A673 (cell line): ENCODE measurements at regions of chr10 and their contacts with region 1.

Region 1: DNA sequence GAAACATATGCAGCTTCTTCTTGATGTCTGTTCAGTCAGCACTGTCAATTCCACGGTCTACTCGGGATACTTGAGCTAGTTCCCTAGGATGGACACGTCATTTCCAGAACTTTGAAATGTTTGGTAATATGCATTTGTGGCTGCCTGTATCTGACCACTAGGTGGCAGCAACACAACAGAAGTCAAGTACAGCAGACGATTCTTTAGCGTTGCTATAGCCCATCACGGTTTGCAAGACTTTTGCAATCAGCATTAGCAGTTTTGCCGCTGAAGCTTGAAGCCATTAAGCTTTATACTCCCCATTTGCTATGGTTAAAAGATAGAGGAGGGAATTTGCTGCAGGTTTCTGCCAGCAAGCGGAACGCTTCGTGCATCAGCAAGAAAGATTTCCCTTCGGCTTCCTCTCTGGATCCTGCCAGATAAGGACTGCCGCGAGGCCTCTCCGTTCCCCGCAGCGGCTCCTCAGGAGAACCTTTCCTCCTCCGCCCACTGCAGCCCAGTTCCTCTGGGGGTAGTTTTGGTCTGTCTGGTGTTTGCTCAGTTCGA is 63.5 kb downstream of the ABCC2 start:
- DNase-seq: peak; percentile 93
- H3K4me3 ChIP-seq: no peak overlapping the region
- H3K27ac ChIP-seq: no peak overlapping the region
- H3K4me1 ChIP-seq: peaks cover 18% of the 10 kb centered on the region
- H3K27me3 ChIP-seq: no peaks in the 10 kb centered on the region
- CTCF ChIP-seq: peak; percentile 96

Region 2: DNA sequence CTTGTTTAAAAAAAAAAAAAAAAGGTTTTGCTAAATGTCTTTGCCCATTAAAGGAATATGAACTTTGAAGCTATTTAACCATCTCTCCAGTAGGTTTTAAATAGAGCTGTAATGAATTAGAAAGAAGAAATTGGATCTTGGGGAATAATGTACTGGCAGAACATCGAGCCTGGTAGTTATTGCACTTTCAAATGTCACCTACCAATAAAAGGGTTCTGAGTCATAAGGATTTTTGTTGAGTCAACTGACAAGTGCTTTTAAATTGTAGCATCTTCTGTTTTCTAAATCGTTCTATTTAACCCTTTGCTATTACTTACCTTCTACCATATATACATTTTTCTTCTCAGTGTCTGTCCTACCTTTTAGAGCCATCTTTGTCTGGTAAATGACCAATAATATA is 103.2 kb before region 1 on chr10:
- CTCF ChIA-PET with region 1: no interaction called
- POLR2A ChIA-PET with region 1: no interaction called
- intact Hi-C with region 1: no loop called
- DNase-seq: no peak
- H3K4me3 ChIP-seq: no peak overlapping the region
- H3K27ac ChIP-seq: no peak overlapping the region
- H3K4me1 ChIP-seq: no peaks in the 10 kb centered on the region
- H3K27me3 ChIP-seq: no peaks in the 10 kb centered on the region
- CTCF ChIP-seq: no peak

Region 3: GRCh38 chr10:99859585-99859984 is 13.7 kb after region 1 on chr10:
- CTCF ChIA-PET with region 1: no interaction called
- POLR2A ChIA-PET with region 1: no interaction called
- intact Hi-C with region 1: no loop called
- DNase-seq: peak; percentile 34
- H3K4me3 ChIP-seq: no peak overlapping the region
- H3K27ac ChIP-seq: no peak overlapping the region
- H3K4me1 ChIP-seq: peaks cover 4% of the 10 kb centered on the region
- H3K27me3 ChIP-seq: no peaks in the 10 kb centered on the region
- CTCF ChIP-seq: peak; percentile 61

Region 4: DNA sequence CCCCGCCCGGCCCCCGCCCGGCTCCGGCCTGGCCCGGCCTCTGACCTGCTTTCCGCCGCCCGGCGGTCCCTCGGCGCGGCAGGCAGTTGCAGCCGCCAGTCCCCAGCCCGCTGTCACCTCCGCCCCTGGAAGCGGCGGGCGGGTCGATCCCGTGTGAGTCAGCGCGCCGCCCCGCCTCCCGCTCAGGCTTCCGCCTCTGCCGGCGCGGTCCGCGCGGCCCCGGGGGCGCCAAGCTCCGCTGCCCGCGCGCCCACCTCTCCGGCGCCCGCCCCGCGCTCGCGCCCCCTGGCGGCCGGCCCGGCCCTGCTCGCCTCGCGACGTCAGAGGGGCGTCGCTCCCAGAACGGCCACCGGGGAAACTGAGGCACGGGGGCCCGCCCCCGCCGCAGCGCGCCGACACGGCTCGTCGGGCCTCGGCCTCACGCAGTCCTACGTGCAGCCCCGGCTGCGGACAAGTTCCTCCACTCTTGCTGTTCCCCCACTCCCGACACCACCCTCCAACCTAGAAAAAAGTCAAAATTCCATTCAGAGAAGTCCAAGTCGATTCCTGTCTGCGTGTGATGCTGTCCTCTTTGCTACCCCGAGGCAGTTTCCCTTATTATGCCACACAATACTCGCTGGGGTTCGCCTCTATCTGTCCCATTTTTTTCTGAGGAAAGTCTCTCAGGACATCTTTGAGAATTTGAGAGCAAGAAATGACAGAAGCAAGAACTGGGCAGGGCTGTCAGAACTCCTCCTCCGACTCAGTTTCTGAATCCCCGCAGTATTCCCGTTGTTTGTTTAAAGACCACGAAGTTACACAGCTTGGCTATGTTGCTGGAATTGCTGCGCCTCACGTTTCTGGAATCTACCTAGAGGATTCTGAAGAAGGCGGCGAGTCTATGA is 164.1 kb after region 1 on chr10 and contains the start of gene DNMBP:
- CTCF ChIA-PET with region 1: interaction called, 8 read pairs
- POLR2A ChIA-PET with region 1: no interaction called
- intact Hi-C with region 1: loop called (anchors 5 kb)
- DNase-seq: peak; percentile 92
- H3K4me3 ChIP-seq: peak within 1 kb of the TSS; percentile 61
- H3K27ac ChIP-seq: peak within 1 kb of the TSS; percentile 53
- H3K4me1 ChIP-seq: peaks cover 29% of the 10 kb centered on the region
- H3K27me3 ChIP-seq: no peaks in the 10 kb centered on the region
- CTCF ChIP-seq: peak; percentile 54
- total RNA-seq, gene DNMBP: 23.6 and 28.0 TPM in 2 replicates

Region 5: GRCh38 chr10:100100651-100101184 is 254.8 kb after region 1 on chr10:
- CTCF ChIA-PET with region 1: interaction called, 4 read pairs
- POLR2A ChIA-PET with region 1: no interaction called
- intact Hi-C with region 1: loop called (anchors 5 kb)
- DNase-seq: peak; percentile 38
- H3K4me3 ChIP-seq: no peak overlapping the region
- H3K27ac ChIP-seq: no peak overlapping the region
- H3K4me1 ChIP-seq: no peaks in the 10 kb centered on the region
- H3K27me3 ChIP-seq: no peaks in the 10 kb centered on the region
- CTCF ChIP-seq: peak; percentile 43

Region 6: DNA sequence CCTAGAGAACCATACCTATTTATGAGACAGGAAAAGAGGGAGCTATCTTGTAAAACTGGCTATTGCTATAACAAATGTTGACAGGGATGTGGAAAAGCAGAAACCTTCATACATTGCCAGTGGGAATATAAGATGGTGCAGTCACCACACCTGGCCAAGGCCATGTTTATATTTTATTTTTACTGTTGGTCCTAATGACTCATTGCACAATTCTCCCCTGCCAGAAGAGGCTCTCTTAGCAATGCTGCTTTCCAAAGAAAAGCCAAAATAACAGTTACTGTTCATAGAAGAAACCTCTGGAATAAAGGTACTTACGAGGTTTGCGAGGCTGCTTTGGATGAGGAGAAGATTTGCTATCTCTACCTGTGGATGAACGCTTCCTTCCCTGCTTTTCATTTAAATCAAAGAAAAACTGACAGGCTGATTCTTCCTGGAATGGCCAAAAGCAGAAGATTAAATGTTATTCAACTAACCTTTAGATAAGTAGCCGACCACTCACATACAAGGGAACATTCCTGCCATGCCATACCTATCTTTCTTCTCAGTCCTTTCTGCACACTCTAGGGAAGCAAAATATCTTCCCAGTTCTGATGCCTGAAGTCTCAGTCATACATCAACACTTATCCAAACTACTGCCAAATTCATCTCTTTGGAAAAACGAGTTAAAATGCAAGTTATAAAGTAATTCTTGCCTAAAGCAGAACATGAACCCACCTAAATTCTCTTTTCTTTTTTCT is 399.7 kb after region 1 on chr10:
- CTCF ChIA-PET with region 1: interaction called, 4 read pairs
- POLR2A ChIA-PET with region 1: no interaction called
- intact Hi-C with region 1: loop called (anchors 10 kb)
- DNase-seq: no peak
- H3K4me3 ChIP-seq: no peak overlapping the region
- H3K27ac ChIP-seq: no peak overlapping the region
- H3K4me1 ChIP-seq: no peaks in the 10 kb centered on the region
- H3K27me3 ChIP-seq: no peaks in the 10 kb centered on the region
- CTCF ChIP-seq: no peak

Region 7: GRCh38 chr10:100433253-100434240 is 587.6 kb after region 1 on chr10:
- CTCF ChIA-PET with region 1: interaction called, 3 read pairs
- POLR2A ChIA-PET with region 1: no interaction called
- intact Hi-C with region 1: loop called (anchors 5 kb)
- DNase-seq: peak; percentile 96
- H3K4me3 ChIP-seq: no peak overlapping the region
- H3K27ac ChIP-seq: no peak overlapping the region
- H3K4me1 ChIP-seq: no peaks in the 10 kb centered on the region
- H3K27me3 ChIP-seq: no peaks in the 10 kb centered on the region
- CTCF ChIP-seq: peak; percentile 100